ENCODE measurements at regions of chr6 and their contacts with region 1.

Region 1: DNA sequence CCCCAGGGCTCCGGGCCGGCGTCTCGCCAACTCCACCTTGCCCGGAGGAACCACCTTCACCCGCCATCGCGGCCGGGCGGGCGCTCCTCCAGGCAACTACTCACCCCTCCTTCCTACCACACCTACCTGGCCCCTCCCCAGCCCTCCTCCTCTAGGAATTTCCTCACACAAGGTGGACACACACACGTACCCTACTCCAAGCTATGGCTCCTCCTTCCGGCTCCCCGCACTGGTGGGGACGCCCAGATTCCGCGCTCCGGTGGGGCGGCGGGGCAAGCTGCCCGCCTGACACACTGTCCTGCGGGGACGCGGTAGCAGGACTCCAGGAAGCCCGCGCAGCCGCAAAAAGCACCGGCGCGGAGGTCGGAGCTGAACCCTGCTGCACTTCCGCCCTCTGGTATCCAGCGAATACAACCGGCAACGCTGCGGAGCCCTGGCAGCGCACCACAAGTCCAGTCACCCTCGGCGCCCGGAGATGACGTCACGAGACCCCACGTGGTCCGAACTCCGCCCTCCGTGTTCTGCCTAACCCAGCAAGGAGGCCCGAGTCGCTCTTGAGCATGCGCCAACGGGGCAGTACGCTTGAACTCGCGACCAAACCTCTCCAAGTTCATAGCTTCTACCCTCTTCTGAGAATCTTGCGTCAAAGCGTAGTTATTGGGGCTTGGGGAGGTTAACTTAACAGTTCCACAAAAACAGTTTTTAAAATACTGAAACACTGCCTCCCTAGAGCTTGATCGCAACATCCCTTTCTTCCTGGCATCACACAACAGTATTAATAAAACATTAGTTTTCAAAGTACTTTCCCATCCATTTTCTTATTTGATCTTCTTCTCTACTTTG is at the start of gene ATG5:
- DNase-seq: peak; percentile 99 to 100 (median 100)
- ATAC-seq: peak; percentile 91
- H3K4me3 ChIP-seq: peak within 1 kb of the TSS; percentile 94 to 96
- H3K4me3 Mint-ChIP-seq: peak within 1 kb of the TSS; percentile 99
- H3K27ac ChIP-seq: peak within 1 kb of the TSS; percentile 90
- H3K27ac Mint-ChIP-seq: peak within 1 kb of the TSS; percentile 96
- H3K4me1 ChIP-seq: peaks cover 28% of the 10 kb centered on the region
- H3K4me1 Mint-ChIP-seq: peaks cover 47% of the 10 kb centered on the region
- H3K27me3 ChIP-seq: no peaks in the 10 kb centered on the region
- H3K27me3 Mint-ChIP-seq: peaks cover 12% of the 10 kb centered on the region
- CTCF ChIP-seq: no peak
- total RNA-seq, gene ATG5: 28.7 to 28.9 TPM

Region 2: DNA sequence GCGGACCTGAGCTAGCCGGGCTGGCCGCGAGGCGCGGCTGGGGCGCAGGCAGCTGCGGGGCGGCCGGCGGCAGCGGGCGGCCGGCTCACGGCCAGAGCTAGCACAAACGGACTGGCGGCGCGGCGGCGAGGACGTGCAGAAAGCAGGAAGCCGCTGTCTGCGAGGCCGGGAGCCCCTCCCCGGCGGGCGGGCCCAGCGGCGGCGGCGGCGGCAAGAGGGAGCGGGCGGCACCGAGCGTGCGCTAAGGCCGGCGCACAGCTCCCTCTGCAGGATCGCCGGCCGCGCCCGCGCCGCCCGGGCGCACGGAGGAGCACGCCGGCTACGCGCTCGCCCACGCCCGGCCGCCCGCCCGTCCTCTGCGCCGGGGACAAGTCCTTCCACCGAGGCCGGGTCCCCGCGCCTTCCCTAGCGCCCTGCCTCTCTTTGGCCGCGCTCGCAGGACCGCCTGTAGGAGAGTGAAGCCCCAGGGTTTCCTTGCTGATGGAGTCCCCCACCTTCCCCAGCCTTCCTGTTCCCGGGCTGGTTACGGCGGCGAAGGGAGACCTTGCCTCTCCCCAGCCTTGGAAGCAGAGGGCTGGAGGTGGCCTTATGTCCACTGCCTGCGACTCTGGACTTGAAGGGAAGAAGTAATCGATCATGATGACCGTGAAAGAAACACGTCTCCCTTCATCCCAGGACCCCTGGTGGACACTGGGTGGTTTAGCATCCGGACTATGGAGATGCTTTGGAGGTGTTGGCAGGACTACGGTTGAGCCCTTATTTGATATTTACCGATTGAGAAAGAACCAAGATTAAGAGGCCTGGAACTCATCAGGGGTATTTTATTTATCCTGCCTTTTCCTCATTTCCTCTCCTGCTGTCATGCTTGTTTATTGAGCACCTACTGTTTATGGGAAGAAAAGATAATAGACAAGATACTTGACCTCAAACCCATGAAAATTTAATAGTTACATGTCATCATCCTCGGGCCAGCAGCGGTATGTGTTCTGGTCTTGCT is 922.3 kb before region 1 on chr6 and contains the start of gene PREP:
- CTCF ChIA-PET with region 1: no interaction called
- POLR2A ChIA-PET with region 1: no interaction called
- intact Hi-C with region 1: loop called in 1 of 2 experiments (anchors 1 kb)
- DNase-seq: peak; percentile 62 to 90 (median 80)
- ATAC-seq: peak; percentile 94
- H3K4me3 ChIP-seq: peak within 1 kb of the TSS; percentile 90 to 95
- H3K4me3 Mint-ChIP-seq: peak within 1 kb of the TSS; percentile 90
- H3K27ac ChIP-seq: peak within 1 kb of the TSS; percentile 58 to 61
- H3K27ac Mint-ChIP-seq: peak within 1 kb of the TSS; percentile 73
- H3K4me1 ChIP-seq: peaks cover 46% of the 10 kb centered on the region
- H3K4me1 Mint-ChIP-seq: peaks cover 50% of the 10 kb centered on the region
- H3K27me3 ChIP-seq: no peaks in the 10 kb centered on the region
- H3K27me3 Mint-ChIP-seq: peaks cover 12% of the 10 kb centered on the region
- CTCF ChIP-seq: peak; percentile 83
- total RNA-seq, gene PREP: 15.7 to 17.6 TPM

Region 3: GRCh38 chr6:105492706-105493673 is 832.6 kb before region 1 on chr6:
- CTCF ChIA-PET with region 1: no interaction called
- POLR2A ChIA-PET with region 1: no interaction called
- intact Hi-C with region 1: no loop called
- DNase-seq: no peak
- ATAC-seq: no peak
- H3K4me3 ChIP-seq: no peak overlapping the region
- H3K4me3 Mint-ChIP-seq: no peak overlapping the region
- H3K27ac ChIP-seq: no peak overlapping the region
- H3K27ac Mint-ChIP-seq: no peak overlapping the region
- H3K4me1 ChIP-seq: no peaks in the 10 kb centered on the region
- H3K4me1 Mint-ChIP-seq: no peaks in the 10 kb centered on the region
- H3K27me3 ChIP-seq: no peaks in the 10 kb centered on the region
- H3K27me3 Mint-ChIP-seq: no peaks in the 10 kb centered on the region
- CTCF ChIP-seq: no peak

Region 4: GRCh38 chr6:106097411-106098231 is 227.9 kb before region 1 on chr6:
- CTCF ChIA-PET with region 1: no interaction called
- POLR2A ChIA-PET with region 1: no interaction called
- intact Hi-C with region 1: loop called in 1 of 2 experiments (anchors 2 kb)
- DNase-seq: peak in 7 of 9 experiments; percentile 37 to 93 (median 66)
- ATAC-seq: peak; percentile 65
- H3K4me3 ChIP-seq: peak overlapping the region; percentile 49 to 73
- H3K4me3 Mint-ChIP-seq: peak overlapping the region; percentile 90
- H3K27ac ChIP-seq: peak overlapping the region; percentile 42 to 79
- H3K27ac Mint-ChIP-seq: peak overlapping the region; percentile 92
- H3K4me1 ChIP-seq: peaks cover 39% of the 10 kb centered on the region
- H3K4me1 Mint-ChIP-seq: peaks cover 75% of the 10 kb centered on the region
- H3K27me3 ChIP-seq: no peaks in the 10 kb centered on the region
- H3K27me3 Mint-ChIP-seq: peaks cover 4% of the 10 kb centered on the region
- CTCF ChIP-seq: no peak

Region 5: GRCh38 chr6:106360410-106360988 is 34.9 kb after region 1 on chr6 and contains the start of gene CRYBG1:
- CTCF ChIA-PET with region 1: interaction called, 3 read pairs
- POLR2A ChIA-PET with region 1: no interaction called
- intact Hi-C with region 1: loop called in 1 of 2 experiments (anchors 2 kb)
- DNase-seq: peak; percentile 38 to 82 (median 73)
- ATAC-seq: peak; percentile 95
- H3K4me3 ChIP-seq: peak within 1 kb of the TSS; percentile 44 to 63
- H3K4me3 Mint-ChIP-seq: peak within 1 kb of the TSS; percentile 72
- H3K27ac ChIP-seq: no peak within 1 kb of the TSS
- H3K27ac Mint-ChIP-seq: no peak within 1 kb of the TSS
- H3K4me1 ChIP-seq: peaks cover 13% of the 10 kb centered on the region
- H3K4me1 Mint-ChIP-seq: peaks cover 11% of the 10 kb centered on the region
- H3K27me3 ChIP-seq: peaks cover 19 to 20% of the 10 kb centered on the region in 2 experiments
- H3K27me3 Mint-ChIP-seq: peaks cover 48% of the 10 kb centered on the region
- CTCF ChIP-seq: peak; percentile 97
- total RNA-seq, gene CRYBG1: 45.0 to 46.2 TPM

Region 6: GRCh38 chr6:106461084-106461483 is 135.5 kb after region 1 on chr6:
- CTCF ChIA-PET with region 1: no interaction called
- POLR2A ChIA-PET with region 1: no interaction called
- intact Hi-C with region 1: no loop called
- DNase-seq: no peak
- ATAC-seq: no peak
- H3K4me3 ChIP-seq: no peak overlapping the region
- H3K4me3 Mint-ChIP-seq: no peak overlapping the region
- H3K27ac ChIP-seq: no peak overlapping the region
- H3K27ac Mint-ChIP-seq: no peak overlapping the region
- H3K4me1 ChIP-seq: no peaks in the 10 kb centered on the region
- H3K4me1 Mint-ChIP-seq: no peaks in the 10 kb centered on the region
- H3K27me3 ChIP-seq: no peaks in the 10 kb centered on the region
- H3K27me3 Mint-ChIP-seq: peaks cover 3% of the 10 kb centered on the region
- CTCF ChIP-seq: no peak

Region 7: DNA sequence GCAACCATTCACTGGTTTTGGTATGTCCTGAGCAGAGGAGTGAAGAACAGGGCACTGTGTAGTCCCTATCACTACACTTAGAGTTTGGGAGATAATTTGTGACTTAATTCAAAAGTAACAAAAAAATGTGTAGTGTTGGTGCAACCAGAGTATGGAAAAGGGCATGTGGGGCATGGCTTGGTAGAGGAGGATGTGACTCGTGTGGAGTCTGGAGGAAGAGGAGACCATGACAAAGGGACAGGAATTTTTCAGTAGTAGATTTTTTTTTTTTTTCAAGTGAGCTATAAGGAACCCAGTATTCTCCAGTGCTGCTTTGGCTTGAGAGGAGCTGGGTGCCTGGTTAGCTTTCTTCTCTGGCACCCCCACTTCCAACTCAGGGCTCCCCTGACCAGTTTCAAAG is 707.6 kb after region 1 on chr6:
- CTCF ChIA-PET with region 1: no interaction called
- POLR2A ChIA-PET with region 1: no interaction called
- intact Hi-C with region 1: loop called (anchors 1 kb)
- DNase-seq: no peak
- ATAC-seq: no peak
- H3K4me3 ChIP-seq: no peak overlapping the region
- H3K4me3 Mint-ChIP-seq: no peak overlapping the region
- H3K27ac ChIP-seq: no peak overlapping the region
- H3K27ac Mint-ChIP-seq: no peak overlapping the region
- H3K4me1 ChIP-seq: peaks cover 10% of the 10 kb centered on the region
- H3K4me1 Mint-ChIP-seq: peaks cover 45% of the 10 kb centered on the region
- H3K27me3 ChIP-seq: no peaks in the 10 kb centered on the region
- H3K27me3 Mint-ChIP-seq: no peaks in the 10 kb centered on the region
- CTCF ChIP-seq: no peak

Region 8: DNA sequence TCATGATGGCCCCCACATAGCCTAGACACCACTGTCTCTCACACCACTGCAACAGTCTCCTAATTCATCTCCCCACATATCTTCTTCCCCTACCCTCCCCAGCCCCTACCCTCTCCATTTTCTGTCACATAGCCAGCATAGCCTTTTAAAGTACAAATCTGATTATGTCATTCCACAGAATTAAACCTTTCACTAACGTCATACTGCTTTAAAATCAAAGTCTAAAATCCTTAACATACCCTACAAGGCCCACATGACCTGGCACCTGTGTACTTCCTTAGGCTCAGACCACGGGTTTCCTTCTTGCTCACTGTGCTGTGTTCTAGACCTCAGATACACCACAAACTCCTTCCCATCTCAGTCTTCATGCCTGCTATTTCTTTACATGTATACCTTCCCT is 1743.1 kb after region 1 on chr6:
- CTCF ChIA-PET with region 1: no interaction called
- POLR2A ChIA-PET with region 1: no interaction called
- intact Hi-C with region 1: loop called in 1 of 2 experiments (anchors 5 kb)
- DNase-seq: peak in 4 of 9 experiments; percentile 25 to 78 (median 65)
- ATAC-seq: peak; percentile 93
- H3K4me3 ChIP-seq: no peak overlapping the region
- H3K4me3 Mint-ChIP-seq: no peak overlapping the region
- H3K27ac ChIP-seq: no peak overlapping the region
- H3K27ac Mint-ChIP-seq: no peak overlapping the region
- H3K4me1 ChIP-seq: peaks cover 24% of the 10 kb centered on the region
- H3K4me1 Mint-ChIP-seq: peaks cover 20% of the 10 kb centered on the region
- H3K27me3 ChIP-seq: no peaks in the 10 kb centered on the region
- H3K27me3 Mint-ChIP-seq: no peaks in the 10 kb centered on the region
- CTCF ChIP-seq: no peak

Measured in CD8-positive, alpha-beta T cell (primary cell).